AG04449 (cell line): ENCODE measurements at regions of chr19 and their contacts with region 1.

Region 1: DNA sequence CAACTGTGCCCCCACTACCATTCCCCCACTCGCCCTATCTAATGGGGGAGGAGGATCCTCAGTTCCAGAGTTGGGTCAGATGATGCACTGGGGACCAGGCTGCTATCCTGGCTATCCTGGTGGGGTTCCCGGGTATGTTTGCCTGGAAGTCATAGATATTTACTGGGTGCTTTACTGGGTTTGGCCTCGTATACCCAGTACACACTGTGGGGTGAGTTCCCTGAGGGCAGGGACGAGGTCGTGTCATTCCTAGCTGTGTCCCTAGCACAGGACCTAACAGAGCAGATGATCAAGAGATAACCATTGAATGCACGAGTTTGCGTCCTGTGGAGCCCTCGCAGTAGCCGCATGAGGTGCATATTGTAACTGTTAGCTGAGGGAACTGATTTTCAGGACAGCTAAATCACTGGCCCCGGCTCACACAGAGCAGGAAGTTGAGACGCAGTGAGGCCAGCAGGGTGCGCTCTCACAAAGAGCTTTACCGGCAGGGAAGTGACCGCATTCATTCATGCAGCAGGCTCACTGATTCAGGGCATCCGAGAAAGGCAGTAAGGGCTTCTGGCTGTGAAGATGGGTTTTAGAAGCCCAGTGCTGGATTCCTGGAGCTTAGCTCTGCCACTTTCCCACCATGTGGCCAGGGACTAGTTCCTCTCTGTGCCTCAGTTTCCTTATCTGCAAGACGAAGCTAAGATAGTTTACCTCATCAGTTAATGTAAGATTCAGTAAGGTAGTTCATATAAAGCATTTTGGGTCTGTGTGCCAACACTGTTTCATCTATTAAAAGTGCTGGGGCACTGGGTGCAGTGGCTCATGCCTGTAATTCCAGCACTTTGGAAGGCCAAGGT is 6.0 kb downstream of the RUVBL2 start:
- DNase-seq: no peak
- H3K4me3 ChIP-seq: no peak overlapping the region
- CTCF ChIP-seq: peak; percentile 87

Region 2: DNA sequence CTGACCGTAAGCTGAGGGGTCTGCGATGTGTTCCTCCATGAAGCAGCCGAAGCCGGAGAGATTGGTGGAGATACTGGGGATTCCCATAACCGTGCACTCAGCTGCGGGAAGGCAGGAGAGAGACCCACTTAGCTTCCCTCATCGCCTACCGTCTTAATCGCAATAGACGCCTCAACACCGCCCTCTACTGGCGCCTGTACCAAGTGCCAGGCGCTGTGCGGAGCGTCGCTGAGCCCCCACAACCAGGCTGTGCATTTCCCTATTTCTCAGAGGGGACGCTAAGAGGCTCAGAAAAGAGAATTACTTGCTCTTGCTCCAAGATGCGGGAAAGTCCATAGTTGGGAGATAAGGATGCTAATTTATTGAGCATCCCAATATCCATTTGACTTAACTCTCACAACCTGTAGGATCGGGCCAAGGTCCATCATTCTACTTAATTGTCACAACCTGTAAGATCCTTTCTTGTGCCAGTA is 28.7 kb before region 1 on chr19:
- CTCF ChIA-PET with region 1: interaction called, 128 read pairs
- POLR2A ChIA-PET with region 1: no interaction called
- DNase-seq: no peak
- H3K4me3 ChIP-seq: no peak overlapping the region
- CTCF ChIP-seq: peak; percentile 94

Region 3: DNA sequence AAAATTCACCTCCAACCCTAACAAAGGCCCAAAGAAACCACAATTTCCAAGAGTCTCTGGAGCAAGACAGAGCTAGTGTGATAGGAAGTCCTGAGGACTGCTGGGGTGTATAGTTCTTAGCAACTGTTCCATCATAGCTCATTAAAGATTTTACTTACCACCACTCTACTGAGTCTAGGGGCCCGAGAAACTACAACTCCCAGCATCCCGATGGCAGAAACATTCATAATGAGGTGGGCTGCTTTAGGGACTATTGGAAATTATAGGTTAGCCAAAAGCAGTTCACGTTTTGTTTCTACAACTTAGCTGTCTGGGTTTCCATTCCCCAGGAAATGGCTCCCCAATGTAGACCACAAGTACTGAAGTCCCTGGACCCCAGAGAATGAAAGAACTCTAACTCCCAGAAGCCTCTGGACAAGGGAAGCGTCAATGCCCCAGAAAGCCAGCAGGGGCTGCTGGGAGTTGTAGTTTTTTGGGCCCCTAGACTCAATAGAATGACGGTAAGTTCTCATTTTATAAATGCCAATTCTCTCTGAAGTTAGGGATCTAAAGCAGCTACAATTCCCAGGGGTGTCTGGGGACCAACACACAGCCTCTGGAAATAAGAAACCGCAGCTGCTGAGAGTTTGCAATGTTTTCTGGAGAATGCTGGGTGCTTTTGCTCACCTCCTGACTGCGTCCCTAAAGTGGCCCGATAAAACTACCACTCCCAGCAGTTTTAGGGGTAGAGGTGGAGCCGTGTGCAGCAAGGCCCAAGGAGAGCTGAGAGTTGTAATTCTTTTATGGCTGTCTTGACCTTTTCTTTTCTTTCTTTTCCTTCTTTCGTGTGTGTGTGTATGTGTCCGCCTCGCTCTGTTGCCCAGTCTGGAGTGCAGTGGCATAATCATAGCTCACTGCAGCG is 23.5 kb before region 1 on chr19:
- CTCF ChIA-PET with region 1: interaction called, 128 read pairs
- POLR2A ChIA-PET with region 1: no interaction called
- DNase-seq: no peak
- H3K4me3 ChIP-seq: no peak overlapping the region
- CTCF ChIP-seq: no peak

Region 4: GRCh38 chr19:49017666-49018351 is 18.1 kb after region 1 on chr19:
- CTCF ChIA-PET with region 1: interaction called, 146 read pairs
- POLR2A ChIA-PET with region 1: interaction called, 4 read pairs
- DNase-seq: no peak
- H3K4me3 ChIP-seq: peak overlapping the region; percentile 50
- CTCF ChIP-seq: peak; percentile 74

Region 5: DNA sequence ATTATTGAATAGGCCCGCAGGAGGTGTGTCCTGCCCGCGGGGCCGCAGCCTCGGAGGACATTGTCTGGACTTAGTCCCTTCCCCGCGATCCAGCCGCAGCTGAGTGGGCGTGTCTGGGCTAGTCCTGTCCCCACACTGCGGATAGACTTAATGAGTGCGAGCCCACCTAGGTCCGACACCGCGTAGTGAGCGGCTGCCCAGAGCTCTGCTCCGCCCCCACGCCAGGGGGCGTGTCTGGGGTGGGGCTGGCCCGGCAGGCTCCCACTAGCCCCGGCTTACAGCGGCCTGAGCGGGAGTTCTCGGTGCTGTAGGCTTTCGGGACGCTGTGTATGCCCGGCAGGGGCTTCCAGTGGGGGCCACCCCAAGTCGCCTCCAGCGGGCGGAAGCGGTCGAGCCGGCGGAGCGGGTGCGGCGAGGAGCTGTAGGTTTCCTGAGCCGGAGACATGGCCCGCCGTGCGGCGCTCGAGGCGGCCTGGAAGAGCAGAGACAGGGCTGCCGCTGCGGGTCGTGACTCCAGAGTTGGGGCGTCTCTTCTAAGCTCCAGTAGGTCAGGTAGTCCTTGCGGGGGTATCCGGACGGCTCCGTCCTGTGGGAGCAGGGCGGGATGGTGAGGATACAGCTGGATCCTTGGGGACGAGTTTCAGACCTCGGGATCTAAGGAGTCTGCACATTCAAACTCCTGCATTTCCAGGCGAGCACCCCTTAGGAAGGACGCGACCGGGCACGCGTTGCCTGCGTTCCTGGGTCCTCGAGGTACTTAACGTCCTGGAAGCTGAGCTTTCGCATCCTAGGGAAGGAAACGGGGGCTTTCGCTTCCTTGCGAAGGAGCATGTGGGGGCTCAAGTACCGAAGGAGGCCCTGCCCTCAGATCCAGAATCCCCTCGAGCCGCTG is 56.6 kb after region 1 on chr19:
- CTCF ChIA-PET with region 1: interaction called, 46 read pairs
- POLR2A ChIA-PET with region 1: interaction called, 4 read pairs
- DNase-seq: no peak
- H3K4me3 ChIP-seq: peak overlapping the region; percentile 66
- CTCF ChIP-seq: peak; percentile 46

Region 6: DNA sequence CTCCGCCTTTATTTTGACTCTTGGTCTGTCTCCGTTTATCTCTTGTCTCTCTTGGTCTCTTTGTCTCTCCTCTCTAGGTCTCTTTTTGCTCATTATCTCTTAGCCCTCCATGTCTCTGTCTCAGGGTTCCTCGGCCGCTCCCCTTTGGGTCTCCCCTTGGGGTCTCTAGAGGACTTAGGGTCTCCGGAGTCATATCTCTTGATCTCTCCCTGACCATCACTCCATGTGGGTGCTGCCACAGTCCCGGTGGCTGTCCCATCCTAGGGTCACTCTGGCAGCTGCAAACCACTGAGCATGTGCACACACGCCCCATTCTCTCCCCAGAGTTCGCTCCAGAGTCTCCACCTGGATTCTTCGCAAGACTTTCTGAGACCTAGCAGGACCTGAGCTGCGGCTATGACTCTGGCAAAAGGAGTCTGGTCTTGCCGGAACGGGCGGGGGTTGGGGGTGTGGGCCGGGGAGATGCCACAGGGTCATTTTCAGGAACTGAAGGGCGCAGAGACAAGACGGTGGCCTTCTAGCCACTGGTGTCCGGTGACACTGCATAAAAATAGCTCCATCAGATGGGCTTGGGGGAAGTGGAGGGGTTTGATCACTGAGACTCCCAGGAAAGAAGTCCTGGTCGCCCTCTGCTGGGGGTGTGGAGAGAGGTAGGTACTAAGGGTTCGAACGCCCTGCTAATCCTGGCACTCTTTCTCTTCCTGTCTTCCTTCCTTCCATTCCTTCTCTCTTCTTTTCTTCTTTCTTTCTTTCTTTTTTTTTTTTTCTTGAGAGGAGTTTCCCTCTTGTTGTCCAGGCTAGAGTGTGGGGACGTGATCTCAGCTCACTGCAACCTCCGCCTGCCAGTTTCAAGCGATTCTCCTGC is 74.0 kb after region 1 on chr19:
- CTCF ChIA-PET with region 1: interaction called, 30 read pairs
- POLR2A ChIA-PET with region 1: interaction called, 3 read pairs
- DNase-seq: no peak
- H3K4me3 ChIP-seq: no peak overlapping the region
- CTCF ChIP-seq: peak; percentile 34

Region 7: DNA sequence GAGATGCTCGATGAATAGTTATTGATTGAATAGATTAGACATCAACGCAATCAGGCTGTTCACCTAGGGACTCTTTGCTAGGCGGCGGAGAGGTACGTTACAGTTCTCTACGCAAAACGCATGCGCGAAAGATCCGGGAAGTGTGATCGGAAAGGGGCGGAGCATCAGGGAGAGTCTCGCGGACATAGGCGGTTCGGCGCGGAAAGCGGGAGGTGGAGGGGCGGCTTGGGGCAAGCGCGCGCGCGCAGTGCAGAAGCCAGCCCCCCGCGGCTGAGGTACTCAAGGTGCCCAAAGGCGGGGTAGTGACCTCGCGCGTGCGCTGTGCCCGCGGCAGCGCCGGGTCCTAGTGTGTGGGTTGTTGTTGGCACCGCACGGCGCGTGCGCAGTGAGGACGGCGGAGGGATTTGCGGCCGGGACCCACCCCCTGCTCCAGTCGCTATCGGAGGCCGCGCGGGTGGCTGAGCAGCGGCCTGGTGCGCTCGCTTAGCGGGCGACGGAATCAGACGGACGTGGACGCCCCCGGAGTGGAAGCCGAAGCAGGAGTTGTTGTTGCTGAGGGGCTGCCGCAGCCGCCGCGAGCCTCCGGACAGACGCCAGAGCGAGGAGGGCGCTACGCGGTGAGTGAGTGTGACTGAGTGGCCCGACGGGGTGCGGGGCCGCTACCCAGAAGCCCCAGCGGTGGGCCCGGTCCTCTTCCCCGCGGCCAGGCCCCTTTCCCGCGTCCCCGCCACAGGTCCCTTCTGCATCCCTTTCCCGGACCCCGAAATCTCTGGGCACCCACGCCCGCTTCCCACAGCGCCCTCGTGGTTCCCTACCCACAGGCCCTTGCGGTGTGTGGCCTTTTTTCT is 85.5 kb after region 1 on chr19 and contains the start of gene SNRNP70:
- CTCF ChIA-PET with region 1: interaction called, 11 read pairs
- POLR2A ChIA-PET with region 1: no interaction called
- DNase-seq: peak; percentile 95
- H3K4me3 ChIP-seq: peak within 1 kb of the TSS; percentile 95
- CTCF ChIP-seq: no peak